T-cell (primary cell): ENCODE measurements at regions of chr2 and their contacts with region 1.

Region 1: GRCh38 chr2:203718087-203718486 is 11.6 kb downstream of the CD28 start:
- DNase-seq: peak in 32 of 35 experiments; percentile 14 to 71 (median 40)
- ATAC-seq: peak; percentile 47 to 56 (median 55)
- H3K4me3 ChIP-seq: peak overlapping the region; percentile 2 to 17
- H3K4me3 Mint-ChIP-seq: peak overlapping the region; percentile 63 to 83 (median 73)
- H3K27ac ChIP-seq: peak overlapping the region; percentile 75
- H3K27ac Mint-ChIP-seq: peak overlapping the region; percentile 98 to 99
- H3K4me1 ChIP-seq: peaks cover 70 to 88% of the 10 kb centered on the region in 2 experiments
- H3K4me1 Mint-ChIP-seq: peaks cover 96 to 99% (median 98%) of the 10 kb centered on the region in 3 donors
- H3K27me3 ChIP-seq: no peaks in the 10 kb centered on the region
- H3K27me3 Mint-ChIP-seq: no peaks in the 10 kb centered on the region

Region 2: DNA sequence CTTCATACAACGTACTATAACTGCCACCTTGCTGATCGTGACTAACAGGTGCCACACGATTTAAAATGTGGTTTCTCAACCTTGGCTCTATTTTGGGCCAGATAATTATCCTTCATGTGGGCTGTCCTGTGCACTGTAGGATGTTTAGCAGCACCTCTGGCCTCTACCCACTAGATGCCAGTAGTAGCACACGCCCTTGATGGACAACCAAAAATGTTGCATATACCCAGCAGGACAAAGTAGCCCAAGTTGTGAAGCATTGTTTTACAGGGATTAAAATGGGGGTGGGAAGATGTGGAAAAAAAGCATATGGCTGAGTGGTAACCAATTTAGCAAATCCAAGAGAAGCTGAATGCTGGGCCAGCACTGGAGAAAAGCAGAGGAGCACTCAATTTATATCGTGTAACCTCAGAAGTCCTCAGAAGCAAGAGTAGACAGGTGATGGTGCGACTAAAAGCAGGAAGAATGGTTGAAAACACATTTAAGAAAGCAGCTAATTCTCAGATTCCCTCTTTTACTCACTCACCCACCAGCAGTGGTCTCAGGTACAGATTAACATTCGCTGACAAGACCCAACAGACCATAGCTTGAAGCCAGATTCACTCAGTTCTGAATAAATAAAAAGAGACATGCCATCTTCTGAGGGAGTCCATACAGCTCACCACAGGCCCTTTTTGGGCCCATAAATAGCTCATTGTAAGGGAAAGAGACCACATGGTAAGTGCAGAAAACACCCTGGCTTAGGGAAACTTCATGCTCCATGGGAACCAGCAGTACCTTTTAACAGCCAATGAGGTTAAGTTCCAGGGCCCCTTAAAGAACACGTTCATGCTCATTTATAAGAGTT is 233.6 kb before region 1 on chr2:
- CTCF ChIA-PET with region 1: interaction called in 1 of 2 experiments, 14 read pairs
- POLR2A ChIA-PET with region 1: no interaction called
- DNase-seq: peak; percentile 3 to 80 (median 46)
- ATAC-seq: peak; percentile 82 to 95 (median 94)
- H3K4me3 ChIP-seq: no peak overlapping the region
- H3K4me3 Mint-ChIP-seq: no peak overlapping the region
- H3K27ac ChIP-seq: no peak overlapping the region
- H3K27ac Mint-ChIP-seq: peak overlapping the region in 1 of 2 donors; percentile 40
- H3K4me1 ChIP-seq: peaks cover 3% of the 10 kb centered on the region in 2 experiments
- H3K4me1 Mint-ChIP-seq: peaks cover 6 to 7% (median 7%) of the 10 kb centered on the region in 3 donors
- H3K27me3 ChIP-seq: no peaks in the 10 kb centered on the region
- H3K27me3 Mint-ChIP-seq: no peaks in the 10 kb centered on the region

Region 3: GRCh38 chr2:203591642-203592041 is 126.4 kb before region 1 on chr2:
- CTCF ChIA-PET with region 1: interaction called in 1 of 2 experiments, 11 read pairs
- POLR2A ChIA-PET with region 1: no interaction called
- DNase-seq: no peak
- ATAC-seq: no peak
- H3K4me3 ChIP-seq: no peak overlapping the region
- H3K4me3 Mint-ChIP-seq: no peak overlapping the region
- H3K27ac ChIP-seq: no peak overlapping the region
- H3K27ac Mint-ChIP-seq: no peak overlapping the region
- H3K4me1 ChIP-seq: no peaks in the 10 kb centered on the region
- H3K4me1 Mint-ChIP-seq: no peaks in the 10 kb centered on the region
- H3K27me3 ChIP-seq: no peaks in the 10 kb centered on the region
- H3K27me3 Mint-ChIP-seq: no peaks in the 10 kb centered on the region

Region 4: DNA sequence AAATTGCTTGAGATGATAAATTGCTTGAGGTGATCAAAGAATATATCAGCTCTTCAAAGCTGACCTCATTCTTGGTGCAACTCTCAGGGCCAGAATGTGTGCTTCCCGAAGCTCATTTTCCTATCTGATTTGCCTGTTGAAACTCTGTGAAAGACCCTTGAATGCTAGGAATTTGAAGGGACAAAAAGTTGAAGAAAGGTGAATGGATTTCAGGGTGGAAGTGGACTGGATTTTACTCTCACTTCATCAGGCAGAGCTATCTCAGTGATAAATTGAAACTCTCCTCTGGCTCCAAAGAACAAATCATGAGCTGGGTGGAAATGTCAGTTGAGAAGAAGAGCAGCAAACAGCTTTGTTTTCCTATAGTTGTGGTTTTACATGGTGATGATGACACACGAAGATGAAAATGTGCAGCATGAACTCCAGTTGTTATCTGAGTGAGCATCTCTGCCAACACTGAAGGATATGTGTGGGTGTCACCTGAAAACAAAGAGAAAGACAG is 22.7 kb after region 1 on chr2:
- CTCF ChIA-PET with region 1: interaction called, 8 to 46 read pairs
- POLR2A ChIA-PET with region 1: interaction called, 15 to 47 read pairs
- DNase-seq: peak in 25 of 35 experiments; percentile 21 to 85 (median 54)
- ATAC-seq: peak; percentile 86 to 90 (median 88)
- H3K4me3 ChIP-seq: peak overlapping the region in 1 of 2 donors; percentile 38
- H3K4me3 Mint-ChIP-seq: peak overlapping the region; percentile 59 to 69 (median 63)
- H3K27ac ChIP-seq: peak overlapping the region; percentile 79
- H3K27ac Mint-ChIP-seq: peak overlapping the region; percentile 90 to 91
- H3K4me1 ChIP-seq: peaks cover 62 to 74% of the 10 kb centered on the region in 2 experiments
- H3K4me1 Mint-ChIP-seq: peaks cover 85 to 91% (median 88%) of the 10 kb centered on the region in 3 donors
- H3K27me3 ChIP-seq: no peaks in the 10 kb centered on the region
- H3K27me3 Mint-ChIP-seq: no peaks in the 10 kb centered on the region

Region 5: DNA sequence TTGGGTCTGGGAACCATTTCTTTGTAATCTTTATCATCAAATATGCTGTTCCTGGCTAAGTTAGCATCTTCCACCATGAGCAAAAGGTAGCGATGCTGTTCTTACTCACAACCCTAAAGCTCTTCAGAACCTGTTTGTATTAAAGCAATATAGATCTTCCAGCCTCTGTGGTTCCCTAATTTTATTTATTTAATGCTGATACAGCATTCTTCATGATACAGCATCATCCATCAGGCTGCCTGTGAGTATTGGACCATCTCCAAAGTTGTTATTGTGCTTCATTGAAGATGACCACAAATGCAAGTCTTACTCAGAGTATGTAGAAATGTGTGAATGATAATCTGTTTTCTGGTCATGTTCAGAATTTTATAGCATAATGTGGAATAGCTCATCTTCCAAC is 108.6 kb after region 1 on chr2:
- CTCF ChIA-PET with region 1: no interaction called
- POLR2A ChIA-PET with region 1: no interaction called
- DNase-seq: no peak
- ATAC-seq: no peak
- H3K4me3 ChIP-seq: no peak overlapping the region
- H3K4me3 Mint-ChIP-seq: no peak overlapping the region
- H3K27ac ChIP-seq: no peak overlapping the region
- H3K27ac Mint-ChIP-seq: no peak overlapping the region
- H3K4me1 ChIP-seq: peaks cover 0 to 6% of the 10 kb centered on the region in 2 experiments
- H3K4me1 Mint-ChIP-seq: peaks cover 7 to 23% (median 18%) of the 10 kb centered on the region in 3 donors
- H3K27me3 ChIP-seq: no peaks in the 10 kb centered on the region
- H3K27me3 Mint-ChIP-seq: no peaks in the 10 kb centered on the region